ENCODE measurements at regions of chr7 and their contacts with region 1.

Region 1: DNA sequence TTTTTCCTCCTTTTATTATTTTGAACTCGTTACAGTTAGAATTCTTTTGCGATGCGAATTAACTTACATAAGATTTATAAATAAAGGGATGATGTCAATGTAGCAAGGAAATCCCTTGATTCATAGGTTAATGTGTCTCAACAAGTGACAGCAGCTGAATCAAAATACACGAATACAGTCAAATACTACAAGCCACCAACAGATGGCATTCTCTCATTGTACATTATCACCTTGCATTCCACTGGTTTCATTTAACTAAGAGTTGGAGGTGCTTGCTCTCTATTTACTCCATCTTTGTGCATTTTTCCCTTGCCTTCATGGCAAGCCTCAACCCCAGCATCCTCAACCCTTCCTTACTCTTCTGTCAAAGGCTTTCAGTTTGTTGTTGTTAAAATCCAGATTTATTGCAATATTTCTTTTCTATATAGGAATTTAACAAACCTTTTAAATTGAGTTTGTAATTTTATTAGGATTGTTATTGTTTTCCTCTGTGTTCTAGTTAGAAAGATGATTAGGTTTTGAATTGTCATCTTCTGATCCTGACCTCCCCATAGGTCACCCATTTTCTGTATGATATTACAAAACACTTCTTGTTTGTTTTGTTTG is 78.3 kb downstream of the SLC25A40 start:
- DNase-seq: no peak
- ATAC-seq: peak in 1 of 4 donors; percentile 67
- H3K4me3 ChIP-seq: no peak overlapping the region
- H3K27ac ChIP-seq: no peak overlapping the region
- H3K4me1 ChIP-seq: no peaks in the 10 kb centered on the region
- H3K27me3 ChIP-seq: no peaks in the 10 kb centered on the region
- CTCF ChIP-seq: peak; percentile 48

Region 2: DNA sequence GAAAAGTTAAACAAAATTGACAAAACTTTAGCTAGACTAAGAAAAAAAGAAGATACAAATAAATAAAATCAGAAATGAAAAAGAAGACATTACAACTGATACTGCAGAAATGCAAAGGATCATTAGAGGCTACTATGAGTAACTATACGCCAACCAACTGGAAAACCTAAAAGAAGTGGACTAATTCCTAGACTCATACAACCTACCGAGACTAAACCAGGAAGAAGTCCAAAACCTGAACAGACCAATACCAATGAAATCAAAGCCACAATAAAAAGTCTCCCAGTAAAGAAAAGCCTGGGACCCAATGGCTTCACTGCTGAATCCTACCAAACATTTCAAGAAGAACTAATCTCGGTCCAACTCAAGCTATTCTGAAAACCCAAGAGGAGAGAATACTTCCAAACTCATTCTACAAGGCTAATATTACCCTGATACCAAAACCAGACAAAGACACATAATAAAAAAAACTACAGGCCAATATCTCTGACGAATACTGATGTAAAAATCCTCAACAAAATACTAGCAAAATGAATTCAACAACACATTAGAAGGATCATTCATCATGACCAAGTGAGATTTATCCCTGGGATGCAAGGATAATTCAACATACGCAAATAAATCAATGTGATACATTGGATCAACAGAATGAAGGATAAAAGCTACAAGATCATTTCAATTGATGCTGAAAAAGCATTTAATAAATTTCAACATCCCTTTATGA is 758.7 kb before region 1 on chr7:
- intact Hi-C with region 1: no loop called
- DNase-seq: no peak
- ATAC-seq: no peak
- H3K4me3 ChIP-seq: peak overlapping the region; percentile 56
- H3K27ac ChIP-seq: peak overlapping the region; percentile 19
- H3K4me1 ChIP-seq: no peaks in the 10 kb centered on the region
- H3K27me3 ChIP-seq: no peaks in the 10 kb centered on the region
- CTCF ChIP-seq: no peak

Region 3: DNA sequence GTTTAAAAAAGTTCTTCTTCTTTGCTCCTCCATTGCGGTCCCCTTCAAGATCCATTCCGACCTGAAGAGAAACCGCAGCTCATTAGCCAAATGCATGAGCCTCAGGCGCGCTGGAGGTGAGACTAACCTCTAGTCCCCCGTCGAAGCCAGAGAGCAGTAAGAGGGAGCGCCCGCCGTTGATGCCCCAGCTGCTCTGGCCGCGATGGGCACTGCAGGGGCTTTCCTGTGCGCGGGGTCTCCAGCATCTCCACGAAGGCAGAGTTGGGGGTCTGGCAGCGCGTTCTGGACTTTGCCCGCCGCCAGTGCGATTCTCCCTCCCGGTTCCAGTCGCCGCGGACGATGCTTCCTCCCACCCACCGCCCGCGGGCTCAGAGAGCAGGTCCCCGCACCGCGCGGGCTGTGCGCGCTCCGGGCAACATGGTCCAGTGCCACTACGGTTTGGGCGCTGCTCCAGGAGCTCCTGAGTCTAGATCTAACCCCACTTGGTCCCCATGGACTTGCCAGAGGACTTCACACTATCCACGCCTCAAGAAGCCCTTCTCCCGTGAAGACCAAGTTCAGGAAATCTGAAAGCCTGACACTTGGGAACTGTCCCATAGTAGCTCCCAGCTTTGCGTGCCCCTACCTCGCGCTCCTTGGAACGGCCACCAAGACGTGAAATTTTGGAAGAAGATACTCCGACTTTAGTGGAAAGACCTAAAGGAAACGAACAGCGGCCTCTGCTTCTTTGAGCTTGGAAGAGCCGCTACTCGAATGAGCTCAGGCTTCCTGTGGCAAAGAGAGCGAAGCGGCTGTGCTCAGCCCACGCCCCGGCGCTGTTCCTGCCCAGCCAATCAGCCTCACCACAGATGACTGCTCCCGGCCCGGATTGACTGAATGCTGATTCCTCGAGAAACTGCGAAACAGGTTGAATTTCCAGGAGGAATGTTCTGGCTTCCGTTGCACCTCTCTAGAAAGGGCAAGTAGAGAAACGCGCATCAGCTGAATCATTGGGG is 197.5 kb before region 1 on chr7 and contains the start of gene ABCB1:
- intact Hi-C with region 1: no loop called
- DNase-seq: peak; percentile 58 to 69
- ATAC-seq: peak; percentile 84 to 96 (median 89)
- H3K4me3 ChIP-seq: peak within 1 kb of the TSS; percentile 68
- H3K27ac ChIP-seq: no peak within 1 kb of the TSS
- H3K4me1 ChIP-seq: no peaks in the 10 kb centered on the region
- H3K27me3 ChIP-seq: peaks cover 0 to 24% (median 5%) of the 10 kb centered on the region in 3 donors
- CTCF ChIP-seq: no peak
- total RNA-seq, gene ABCB1: 0.40 to 2.4 (median 1.1) TPM

Region 4: GRCh38 chr7:87672217-87672616 is 125.7 kb before region 1 on chr7:
- intact Hi-C with region 1: no loop called
- DNase-seq: no peak
- ATAC-seq: no peak
- H3K4me3 ChIP-seq: no peak overlapping the region
- H3K27ac ChIP-seq: no peak overlapping the region
- H3K4me1 ChIP-seq: no peaks in the 10 kb centered on the region
- H3K27me3 ChIP-seq: no peaks in the 10 kb centered on the region
- CTCF ChIP-seq: no peak

Region 5: GRCh38 chr7:87759511-87759910 is 38.4 kb before region 1 on chr7:
- intact Hi-C with region 1: no loop called
- DNase-seq: no peak
- ATAC-seq: no peak
- H3K4me3 ChIP-seq: no peak overlapping the region
- H3K27ac ChIP-seq: no peak overlapping the region
- H3K4me1 ChIP-seq: no peaks in the 10 kb centered on the region
- H3K27me3 ChIP-seq: no peaks in the 10 kb centered on the region
- CTCF ChIP-seq: no peak

Region 6: DNA sequence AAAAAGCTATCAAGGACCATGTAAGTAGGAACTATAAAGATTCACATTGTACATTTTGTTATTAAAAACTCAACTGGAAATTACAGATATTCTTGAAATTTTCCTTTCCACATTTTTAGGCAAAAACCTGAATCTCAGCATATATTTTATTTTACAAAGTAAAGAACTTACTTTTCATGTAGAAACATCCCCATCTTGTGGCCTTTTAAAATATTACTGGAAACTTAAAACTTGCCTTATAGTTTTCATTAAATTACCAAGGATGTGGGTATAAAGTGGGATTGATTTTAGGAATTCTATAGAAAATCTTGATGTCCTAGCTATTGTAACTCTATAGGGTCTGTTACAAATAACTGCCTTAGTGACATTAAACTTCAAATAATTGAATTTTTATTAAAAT is 89.0 kb after region 1 on chr7:
- intact Hi-C with region 1: loop called in 1 of 2 experiments (anchors 5 kb)
- DNase-seq: no peak
- ATAC-seq: no peak
- H3K4me3 ChIP-seq: no peak overlapping the region
- H3K27ac ChIP-seq: no peak overlapping the region
- H3K4me1 ChIP-seq: no peaks in the 10 kb centered on the region
- H3K27me3 ChIP-seq: no peaks in the 10 kb centered on the region
- CTCF ChIP-seq: peak; percentile 40

Region 7: DNA sequence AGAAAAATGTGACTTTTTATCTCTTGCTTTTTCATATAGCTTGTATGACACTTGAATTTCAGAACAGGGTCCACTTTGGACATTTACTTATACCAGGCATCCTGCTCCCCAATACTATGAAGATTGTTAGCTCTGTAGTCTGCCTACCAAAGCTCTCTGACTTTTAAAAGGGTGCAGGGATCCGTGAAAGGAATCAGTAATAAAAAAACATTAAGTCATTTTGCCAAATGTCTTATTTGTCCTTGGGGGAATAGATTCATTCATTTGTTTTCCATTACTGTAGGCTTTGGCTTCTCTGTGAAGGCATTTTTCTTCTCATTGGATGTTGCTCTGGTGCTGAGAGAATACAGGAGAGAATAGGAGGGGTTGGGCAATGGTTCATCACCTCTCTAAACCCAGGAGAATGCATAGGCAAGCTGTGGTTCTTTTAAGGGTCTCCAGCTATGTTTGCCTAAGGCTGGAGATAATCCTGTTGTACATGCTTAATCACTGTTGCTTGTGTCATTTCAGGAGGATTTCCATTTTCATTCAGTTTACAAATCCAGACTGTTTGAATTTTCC is 318.4 kb after region 1 on chr7:
- intact Hi-C with region 1: loop called in 1 of 2 experiments (anchors 5 kb)
- DNase-seq: no peak
- ATAC-seq: no peak
- H3K4me3 ChIP-seq: no peak overlapping the region
- H3K27ac ChIP-seq: no peak overlapping the region
- H3K4me1 ChIP-seq: peaks cover 8% of the 10 kb centered on the region
- H3K27me3 ChIP-seq: no peaks in the 10 kb centered on the region
- CTCF ChIP-seq: no peak

Region 8: DNA sequence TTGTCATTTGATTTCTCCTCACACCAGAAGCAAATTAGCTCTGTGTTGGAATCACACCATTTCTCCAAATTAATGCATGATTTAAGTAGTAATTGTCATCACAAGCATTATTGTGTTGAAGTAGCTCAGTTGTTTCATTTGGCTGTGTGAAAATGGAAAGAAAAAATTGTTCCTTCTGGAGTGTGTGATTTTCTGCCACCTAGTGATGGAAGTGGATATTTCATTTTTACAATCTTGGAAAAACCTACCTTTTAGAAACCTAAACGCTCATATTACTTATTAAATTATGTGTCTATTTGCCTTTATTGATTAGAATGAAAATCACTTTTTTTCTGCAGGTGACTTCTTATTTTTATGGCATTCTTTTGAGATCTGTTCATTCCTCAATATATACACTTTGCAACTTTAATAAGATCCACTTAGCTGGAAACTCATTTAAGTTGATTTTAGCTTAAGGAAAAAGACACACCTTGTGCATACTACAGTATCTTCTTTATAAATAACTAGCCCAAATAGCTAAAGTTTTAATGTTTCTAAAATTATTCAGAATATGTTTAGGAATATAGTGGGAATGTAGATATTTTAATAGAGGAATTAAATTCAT is 371.9 kb after region 1 on chr7:
- intact Hi-C with region 1: loop called in 1 of 2 experiments (anchors 5 kb)
- DNase-seq: no peak
- ATAC-seq: no peak
- H3K4me3 ChIP-seq: no peak overlapping the region
- H3K27ac ChIP-seq: no peak overlapping the region
- H3K4me1 ChIP-seq: no peaks in the 10 kb centered on the region
- H3K27me3 ChIP-seq: no peaks in the 10 kb centered on the region
- CTCF ChIP-seq: peak; percentile 52

Measured in psoas muscle (tissue), 8 donors.